ENCODE measurements at regions of chr17 and their contacts with region 1.

Region 1: DNA sequence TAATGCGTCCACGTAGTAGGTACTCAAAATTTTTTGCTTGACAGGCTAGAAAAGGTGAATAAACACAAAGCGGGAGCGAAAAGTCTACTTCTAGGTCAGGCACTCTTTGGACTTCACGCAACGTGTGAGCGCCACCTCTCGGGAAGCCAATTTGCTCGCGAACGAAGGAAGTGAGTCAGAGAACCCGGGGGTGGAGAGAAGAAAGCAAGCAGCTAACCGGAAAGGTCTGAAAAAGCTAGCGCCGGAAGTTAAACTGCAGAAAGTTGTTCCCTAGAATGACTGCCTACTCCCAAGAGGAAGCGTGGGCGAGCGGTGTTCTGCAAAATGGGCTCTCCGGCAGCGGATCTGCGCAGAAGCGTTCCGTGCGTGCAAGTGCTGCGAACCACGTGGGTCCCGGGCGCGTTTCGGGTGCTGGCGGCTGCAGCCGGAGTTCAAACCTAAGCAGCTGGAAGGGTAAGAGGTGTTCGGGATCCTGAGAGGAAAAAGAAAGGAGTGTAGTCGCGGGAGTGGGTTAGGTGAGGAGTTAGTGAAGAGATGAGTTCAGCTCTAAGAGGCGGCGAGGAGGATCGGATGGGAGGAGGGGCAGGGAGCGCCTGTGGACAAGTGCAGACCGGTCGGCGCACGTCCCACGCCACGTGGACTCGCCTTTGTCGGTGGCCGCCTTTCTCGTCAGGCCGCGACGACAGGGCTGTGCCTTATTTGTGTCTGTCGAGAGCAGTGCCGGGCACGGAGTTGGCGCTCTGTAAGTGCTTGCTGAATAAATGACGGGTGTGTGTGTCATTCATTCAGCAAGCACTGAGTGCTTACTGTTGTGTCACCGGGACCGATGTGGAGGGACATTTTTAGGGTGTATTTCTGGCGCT is at the start of gene NME1:
- DNase-seq: peak; percentile 97
- ATAC-seq: peak; percentile 98 to 99
- H3K4me3 ChIP-seq: peak within 1 kb of the TSS; percentile 64 to 77 (median 72)
- H3K27ac ChIP-seq: peak within 1 kb of the TSS; percentile 82 to 90 (median 88)
- H3K4me1 ChIP-seq: peaks cover 17 to 18% of the 10 kb centered on the region in 2 donors
- H3K27me3 ChIP-seq: no peaks in the 10 kb centered on the region
- CTCF ChIP-seq: peak; percentile 70 to 80 (median 78)
- POLR2A ChIP-seq: peak; percentile 34 to 59
- total RNA-seq, gene NME1: 19.1 to 32.6 (median 29.2) TPM

Region 2: DNA sequence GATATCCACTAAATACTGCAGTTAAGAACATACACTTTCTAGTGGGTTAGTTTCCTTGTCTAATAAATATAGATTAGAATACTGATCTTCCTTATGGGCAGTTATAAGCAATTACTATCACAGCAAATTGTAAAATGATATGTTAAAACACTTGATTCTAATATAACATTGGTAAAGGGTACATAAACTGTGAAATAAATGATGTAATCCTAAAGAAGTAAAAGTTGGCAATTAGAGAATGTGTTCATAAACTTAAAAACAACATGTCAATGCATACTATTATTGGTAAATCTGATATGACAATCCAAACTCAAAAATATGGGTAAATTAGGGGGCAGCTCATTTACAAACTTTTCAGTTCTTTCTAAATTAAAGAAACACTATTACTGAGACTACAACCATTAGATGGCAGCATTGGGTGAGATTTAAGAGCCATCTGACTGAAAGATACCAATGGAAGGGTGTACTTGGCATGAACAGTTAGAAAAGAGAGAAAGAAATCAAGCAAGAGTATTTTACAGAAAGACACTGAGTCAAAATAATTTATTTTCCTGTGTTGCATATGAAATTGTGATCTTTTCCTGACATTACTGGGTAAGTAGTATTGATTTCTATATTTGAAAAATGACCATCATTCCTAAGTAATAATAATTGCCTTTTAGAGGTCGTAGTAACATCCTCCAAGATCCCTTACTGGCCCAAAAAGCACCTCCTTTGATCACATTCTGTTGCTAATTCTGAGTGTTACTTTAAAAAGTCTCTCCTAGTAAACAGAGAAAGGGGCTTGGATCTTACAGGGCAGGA is 152.4 kb before region 1 on chr17:
- in situ Hi-C with region 1: loop called (anchors 5 to 10 kb)
- intact Hi-C with region 1: loop called (anchors 1 kb)
- DNase-seq: no peak
- ATAC-seq: peak in 1 of 2 donors; percentile 64
- H3K4me3 ChIP-seq: no peak overlapping the region
- H3K27ac ChIP-seq: peak overlapping the region in 1 of 4 donors; percentile 20
- H3K4me1 ChIP-seq: no peaks in the 10 kb centered on the region
- H3K27me3 ChIP-seq: no peaks in the 10 kb centered on the region
- CTCF ChIP-seq: peak; percentile 35 to 63 (median 48)
- POLR2A ChIP-seq: no peak

Region 3: DNA sequence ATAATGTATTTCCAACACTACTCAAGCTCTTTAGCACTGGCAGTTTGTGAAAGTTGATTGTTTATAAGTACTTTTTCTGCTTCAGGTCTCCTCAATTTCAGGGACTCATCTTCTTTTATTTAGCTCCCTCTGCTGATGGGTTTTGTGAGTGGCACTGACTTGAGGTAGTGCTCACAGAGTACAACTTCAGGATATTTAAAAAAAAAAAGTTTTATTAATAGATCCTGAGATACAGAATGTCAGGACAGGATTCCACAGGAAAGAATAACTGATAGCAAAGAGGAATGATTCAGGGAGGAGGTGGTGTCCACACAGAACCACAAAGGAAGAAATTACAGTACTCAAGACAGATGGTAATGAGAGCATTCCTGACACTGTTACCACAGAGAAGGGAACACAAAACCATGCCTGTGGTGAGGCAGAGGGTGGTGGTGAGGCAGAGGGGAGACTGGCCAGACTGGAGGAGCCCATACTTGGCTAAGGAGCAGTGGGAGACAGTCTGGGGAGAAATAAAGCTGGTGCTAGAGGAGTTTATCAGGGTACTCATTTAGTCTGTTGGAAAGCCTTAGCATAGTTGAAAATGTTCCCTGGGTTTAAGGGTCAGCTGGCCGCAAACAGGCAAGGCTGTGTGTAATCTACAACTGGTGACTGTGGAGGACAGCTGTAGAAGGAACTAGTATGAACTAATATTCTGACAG is 96.5 kb before region 1 on chr17:
- in situ Hi-C with region 1: no loop called
- intact Hi-C with region 1: loop called (anchors 10 kb)
- DNase-seq: peak; percentile 14 to 60
- ATAC-seq: peak; percentile 89 to 96
- H3K4me3 ChIP-seq: no peak overlapping the region
- H3K27ac ChIP-seq: peak overlapping the region; percentile 72 to 78 (median 74)
- H3K4me1 ChIP-seq: peaks cover 34 to 35% of the 10 kb centered on the region in 2 donors
- H3K27me3 ChIP-seq: no peaks in the 10 kb centered on the region
- CTCF ChIP-seq: peak; percentile 16 to 67 (median 51)
- POLR2A ChIP-seq: no peak

Region 4: GRCh38 chr17:51166197-51166986 is 13.0 kb after region 1 on chr17 and contains the start of gene NME2:
- in situ Hi-C with region 1: no loop called
- intact Hi-C with region 1: loop called (anchors 1 kb)
- DNase-seq: peak; percentile 85 to 89
- ATAC-seq: peak; percentile 87 to 88
- H3K4me3 ChIP-seq: peak within 1 kb of the TSS; percentile 80 to 97 (median 88)
- H3K27ac ChIP-seq: peak within 1 kb of the TSS; percentile 93 to 100 (median 98)
- H3K4me1 ChIP-seq: peaks cover 4 to 16% of the 10 kb centered on the region in 2 donors
- H3K27me3 ChIP-seq: no peaks in the 10 kb centered on the region
- CTCF ChIP-seq: peak in 1 of 5 experiments; percentile 16
- POLR2A ChIP-seq: peak; percentile 75 to 78
- total RNA-seq, gene NME2: 412 to 666 (median 508) TPM

Region 5: GRCh38 chr17:51189628-51190027 is 36.2 kb after region 1 on chr17:
- in situ Hi-C with region 1: no loop called
- intact Hi-C with region 1: no loop called
- DNase-seq: no peak
- ATAC-seq: no peak
- H3K4me3 ChIP-seq: no peak overlapping the region
- H3K27ac ChIP-seq: peak overlapping the region in 3 of 4 donors; percentile 12 to 18 (median 15)
- H3K4me1 ChIP-seq: no peaks in the 10 kb centered on the region
- H3K27me3 ChIP-seq: no peaks in the 10 kb centered on the region
- CTCF ChIP-seq: no peak
- POLR2A ChIP-seq: no peak

Measured in gastrocnemius medialis (tissue), 4 donors.